Natural killer cell (primary cell): ENCODE measurements at regions of chr7 and their contacts with region 1.

Region 1: GRCh38 chr7:105652359-105652993 is 71.2 kb upstream of the EFCAB10 start:
- DNase-seq: peak; percentile 47 to 76
- ATAC-seq: peak; percentile 69 to 86 (median 76)
- H3K4me3 ChIP-seq: no peak overlapping the region
- H3K4me3 Mint-ChIP-seq: no peak overlapping the region
- H3K27ac ChIP-seq: no peak overlapping the region
- H3K27ac Mint-ChIP-seq: no peak overlapping the region
- H3K4me1 ChIP-seq: no peaks in the 10 kb centered on the region
- H3K4me1 Mint-ChIP-seq: peaks cover 19 to 22% of the 10 kb centered on the region in 2 donors
- H3K27me3 ChIP-seq: no peaks in the 10 kb centered on the region
- H3K27me3 Mint-ChIP-seq: no peaks in the 10 kb centered on the region
- CTCF ChIP-seq: peak; percentile 65

Region 2: GRCh38 chr7:105617280-105618015 is 35.0 kb before region 1 on chr7:
- intact Hi-C with region 1: loop called (anchors 5 kb)
- DNase-seq: no peak
- ATAC-seq: no peak
- H3K4me3 ChIP-seq: no peak overlapping the region
- H3K4me3 Mint-ChIP-seq: no peak overlapping the region
- H3K27ac ChIP-seq: no peak overlapping the region
- H3K27ac Mint-ChIP-seq: no peak overlapping the region
- H3K4me1 ChIP-seq: no peaks in the 10 kb centered on the region
- H3K4me1 Mint-ChIP-seq: no peaks in the 10 kb centered on the region
- H3K27me3 ChIP-seq: no peaks in the 10 kb centered on the region
- H3K27me3 Mint-ChIP-seq: no peaks in the 10 kb centered on the region
- CTCF ChIP-seq: no peak

Region 3: GRCh38 chr7:105786520-105787468 is 134.3 kb after region 1 on chr7:
- intact Hi-C with region 1: no loop called
- DNase-seq: no peak
- ATAC-seq: no peak
- H3K4me3 ChIP-seq: no peak overlapping the region
- H3K4me3 Mint-ChIP-seq: no peak overlapping the region
- H3K27ac ChIP-seq: no peak overlapping the region
- H3K27ac Mint-ChIP-seq: no peak overlapping the region
- H3K4me1 ChIP-seq: no peaks in the 10 kb centered on the region
- H3K4me1 Mint-ChIP-seq: peaks cover 8% of the 10 kb centered on the region in 2 donors
- H3K27me3 ChIP-seq: no peaks in the 10 kb centered on the region
- H3K27me3 Mint-ChIP-seq: no peaks in the 10 kb centered on the region
- CTCF ChIP-seq: no peak

Region 4: DNA sequence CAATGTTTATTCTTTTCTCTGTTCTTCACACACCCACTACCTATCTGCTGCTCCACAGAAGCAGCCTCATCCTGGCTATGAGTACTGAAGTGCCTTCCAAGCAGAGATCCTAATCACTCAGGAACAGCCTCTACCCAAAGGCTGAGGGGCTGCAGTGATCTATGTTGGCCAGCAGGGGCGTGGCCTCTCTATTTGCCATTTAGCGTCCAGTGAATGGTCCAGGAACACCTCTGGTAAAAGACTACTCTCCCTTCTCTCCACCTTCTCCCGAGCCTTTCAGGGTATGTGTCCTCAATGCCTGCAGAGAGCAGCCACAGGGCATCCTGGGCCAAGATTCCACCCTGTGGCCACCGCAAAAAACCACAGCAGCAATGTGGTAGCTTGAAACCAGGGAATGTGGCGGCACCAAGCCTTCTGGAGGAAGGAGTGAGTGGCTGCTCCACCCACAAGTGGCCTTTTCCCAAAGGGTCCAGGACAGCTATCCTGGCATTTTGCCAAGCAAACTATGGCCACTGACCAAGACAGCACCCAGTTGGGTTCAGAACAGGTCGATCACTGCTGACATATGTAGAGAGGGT is 388.8 kb after region 1 on chr7:
- intact Hi-C with region 1: loop called (anchors 1 kb)
- DNase-seq: peak in 1 of 2 donors; percentile 65
- ATAC-seq: peak; percentile 60 to 68 (median 63)
- H3K4me3 ChIP-seq: no peak overlapping the region
- H3K4me3 Mint-ChIP-seq: no peak overlapping the region
- H3K27ac ChIP-seq: no peak overlapping the region
- H3K27ac Mint-ChIP-seq: no peak overlapping the region
- H3K4me1 ChIP-seq: peaks cover 8% of the 10 kb centered on the region
- H3K4me1 Mint-ChIP-seq: peaks cover 8% of the 10 kb centered on the region in 2 donors
- H3K27me3 ChIP-seq: peaks cover 4% of the 10 kb centered on the region
- H3K27me3 Mint-ChIP-seq: peaks cover 31% of the 10 kb centered on the region in 2 donors
- CTCF ChIP-seq: peak; percentile 72

Region 5: DNA sequence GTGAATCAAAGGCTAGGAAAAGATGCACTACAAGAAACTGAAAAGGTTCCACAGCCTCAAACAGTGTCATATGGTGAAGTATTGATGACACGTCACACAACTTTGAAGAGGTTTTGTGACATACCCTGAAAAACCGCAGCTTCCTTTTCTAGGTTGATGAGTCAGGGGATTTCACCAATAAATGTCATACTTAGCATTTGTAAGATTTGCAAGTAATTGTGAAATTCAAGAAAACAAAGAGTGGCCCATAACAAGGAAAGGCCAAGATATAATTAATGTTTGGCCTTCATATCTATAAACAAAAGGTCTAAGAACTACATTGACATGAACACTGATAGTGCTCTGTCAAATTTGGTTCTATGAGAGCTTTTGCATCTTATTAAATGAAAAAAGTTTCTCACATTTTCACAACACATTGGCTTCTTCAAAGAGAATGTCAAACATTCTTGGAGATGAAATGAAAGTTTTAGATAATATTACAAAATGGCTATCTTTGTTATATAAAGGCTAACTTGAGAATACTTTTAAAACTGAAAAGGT is 694.3 kb after region 1 on chr7:
- intact Hi-C with region 1: no loop called
- DNase-seq: peak in 1 of 2 donors; percentile 86
- ATAC-seq: peak; percentile 71 to 86 (median 85)
- H3K4me3 ChIP-seq: no peak overlapping the region
- H3K4me3 Mint-ChIP-seq: peak overlapping the region; percentile 6
- H3K27ac ChIP-seq: no peak overlapping the region
- H3K27ac Mint-ChIP-seq: peak overlapping the region; percentile 72 to 79
- H3K4me1 ChIP-seq: peaks cover 3% of the 10 kb centered on the region
- H3K4me1 Mint-ChIP-seq: peaks cover 20 to 29% of the 10 kb centered on the region in 2 donors
- H3K27me3 ChIP-seq: no peaks in the 10 kb centered on the region
- H3K27me3 Mint-ChIP-seq: peaks cover 12 to 22% of the 10 kb centered on the region in 2 donors
- CTCF ChIP-seq: no peak